Transverse colon (tissue), 4 donors: ENCODE measurements at regions of chr22 and their contacts with region 1.

Region 1: DNA sequence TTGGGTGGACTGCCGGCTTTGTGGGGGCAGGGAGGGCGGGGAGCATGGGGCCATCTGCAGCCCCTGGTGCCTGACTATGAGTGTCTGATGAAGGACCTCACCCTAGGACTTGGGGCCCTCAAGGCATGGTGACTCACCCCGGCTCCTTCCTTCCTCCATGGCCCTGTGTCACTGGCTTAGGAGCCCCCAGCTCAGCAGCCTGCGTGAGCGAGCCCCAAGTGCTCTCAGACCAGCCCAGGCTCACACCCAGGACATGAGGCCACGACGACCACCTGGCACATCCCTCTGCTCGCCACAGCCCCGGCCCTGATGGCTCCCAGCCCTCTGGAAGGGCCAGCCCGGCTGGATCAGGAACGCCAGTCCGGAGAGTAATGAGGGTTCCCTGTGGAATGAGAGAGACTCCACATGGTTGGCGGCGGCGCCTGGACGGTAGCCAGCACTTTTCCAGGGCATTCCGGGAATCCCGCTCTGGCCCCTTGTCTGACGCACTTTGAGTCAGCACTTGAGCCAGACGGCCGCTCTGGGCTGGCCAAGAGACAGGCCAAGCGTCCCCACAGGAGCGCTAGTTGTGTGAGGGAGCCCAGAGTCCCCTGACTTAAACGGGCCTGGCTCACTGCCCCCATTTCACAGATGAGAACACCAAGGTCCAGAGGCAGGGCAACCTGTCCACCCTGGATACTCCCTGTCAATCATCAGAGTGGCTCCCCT is 50.7 kb upstream of the SHISAL1 start:
- DNase-seq: peak; percentile 80
- H3K4me3 ChIP-seq: no peak overlapping the region
- H3K27ac ChIP-seq: peak overlapping the region; percentile 54 to 80 (median 79)
- H3K4me1 ChIP-seq: peaks cover 9 to 31% (median 21%) of the 10 kb centered on the region in 4 donors
- H3K27me3 ChIP-seq: no peaks in the 10 kb centered on the region
- CTCF ChIP-seq: no peak
- EP300 ChIP-seq: peak; percentile 82
- POLR2A ChIP-seq: no peak

Region 2: DNA sequence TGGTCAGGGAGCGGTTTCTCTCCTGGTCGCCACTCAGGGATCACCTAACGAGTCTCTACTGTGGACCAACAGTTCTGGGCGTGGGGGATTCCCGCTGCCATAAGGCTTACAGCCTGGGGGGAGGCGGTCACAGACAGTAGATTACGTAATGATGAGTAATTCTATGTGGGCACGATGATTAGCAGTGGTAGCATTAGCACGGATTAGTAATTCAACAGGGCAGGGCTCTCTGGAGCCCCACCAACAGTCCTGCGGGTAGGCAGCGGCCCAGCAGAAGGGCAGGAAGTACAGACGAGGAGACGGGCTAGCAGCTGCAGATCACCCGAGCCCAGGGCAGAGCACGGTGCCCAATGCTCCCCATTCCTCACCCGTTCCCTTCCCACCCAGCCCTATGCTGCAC is 54.3 kb before region 1 on chr22:
- in situ Hi-C with region 1: no loop called
- intact Hi-C with region 1: loop called (anchors 5 kb)
- DNase-seq: peak; percentile 43
- H3K4me3 ChIP-seq: no peak overlapping the region
- H3K27ac ChIP-seq: peak overlapping the region; percentile 77 to 88 (median 80)
- H3K4me1 ChIP-seq: peaks cover 19 to 54% (median 35%) of the 10 kb centered on the region in 4 donors
- H3K27me3 ChIP-seq: no peaks in the 10 kb centered on the region
- CTCF ChIP-seq: no peak
- EP300 ChIP-seq: no peak
- POLR2A ChIP-seq: no peak